Esophagus muscularis mucosa (tissue), 4 donors: ENCODE measurements at regions of chr2 and their contacts with region 1.

Region 1: DNA sequence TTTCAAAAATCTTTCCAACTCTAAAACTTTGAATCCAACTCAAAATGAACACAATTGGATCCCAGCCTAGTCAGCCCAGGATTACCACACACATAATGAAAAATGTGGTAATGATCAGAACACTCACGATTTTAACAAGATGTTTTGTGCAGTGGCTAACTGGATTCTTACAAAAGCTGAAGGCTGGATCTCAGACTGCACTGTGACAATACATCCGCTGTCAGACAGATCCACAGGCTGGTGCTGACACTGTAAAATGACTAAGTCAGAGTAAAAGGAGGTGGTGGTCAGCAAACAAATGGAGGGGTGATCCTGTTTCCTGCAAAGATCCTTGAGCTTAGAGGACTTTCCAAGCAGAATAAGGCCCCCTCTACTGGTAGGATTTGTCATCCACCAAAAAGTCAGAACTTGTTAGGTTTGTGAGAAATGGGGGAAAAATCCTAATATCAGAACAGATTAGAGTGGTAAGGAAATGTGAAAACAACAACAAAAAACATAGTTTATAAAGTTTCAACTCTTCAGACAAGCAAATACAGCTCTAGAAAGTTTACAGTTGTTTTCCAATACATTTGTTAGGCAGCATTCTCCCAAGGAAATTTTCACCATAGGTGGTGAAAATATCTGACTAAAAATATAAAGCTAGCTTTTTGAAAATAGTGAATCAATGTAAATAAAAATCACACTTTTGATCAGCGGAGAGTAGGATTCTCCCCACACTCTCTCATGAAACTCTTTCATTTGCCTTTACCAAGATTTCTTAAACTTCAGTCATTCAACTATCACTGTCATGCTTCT is 211.9 kb downstream of the AGPS start:
- DNase-seq: peak; percentile 82
- H3K4me3 ChIP-seq: no peak overlapping the region
- H3K27ac ChIP-seq: no peak overlapping the region
- H3K4me1 ChIP-seq: peaks cover under 1 to 9% (median 4%) of the 10 kb centered on the region in 4 donors
- H3K27me3 ChIP-seq: no peaks in the 10 kb centered on the region
- CTCF ChIP-seq: peak; percentile 47 to 71 (median 63)
- EP300 ChIP-seq: no peak
- POLR2A ChIP-seq: no peak

Region 2: GRCh38 chr2:177169810-177170514 is 434.5 kb before region 1 on chr2:
- intact Hi-C with region 1: loop called (anchors 10 kb)
- DNase-seq: no peak
- H3K4me3 ChIP-seq: no peak overlapping the region
- H3K27ac ChIP-seq: no peak overlapping the region
- H3K4me1 ChIP-seq: peaks cover 10 to 19% (median 11%) of the 10 kb centered on the region in 4 donors
- H3K27me3 ChIP-seq: no peaks in the 10 kb centered on the region
- CTCF ChIP-seq: no peak
- EP300 ChIP-seq: no peak
- POLR2A ChIP-seq: no peak

Region 3: DNA sequence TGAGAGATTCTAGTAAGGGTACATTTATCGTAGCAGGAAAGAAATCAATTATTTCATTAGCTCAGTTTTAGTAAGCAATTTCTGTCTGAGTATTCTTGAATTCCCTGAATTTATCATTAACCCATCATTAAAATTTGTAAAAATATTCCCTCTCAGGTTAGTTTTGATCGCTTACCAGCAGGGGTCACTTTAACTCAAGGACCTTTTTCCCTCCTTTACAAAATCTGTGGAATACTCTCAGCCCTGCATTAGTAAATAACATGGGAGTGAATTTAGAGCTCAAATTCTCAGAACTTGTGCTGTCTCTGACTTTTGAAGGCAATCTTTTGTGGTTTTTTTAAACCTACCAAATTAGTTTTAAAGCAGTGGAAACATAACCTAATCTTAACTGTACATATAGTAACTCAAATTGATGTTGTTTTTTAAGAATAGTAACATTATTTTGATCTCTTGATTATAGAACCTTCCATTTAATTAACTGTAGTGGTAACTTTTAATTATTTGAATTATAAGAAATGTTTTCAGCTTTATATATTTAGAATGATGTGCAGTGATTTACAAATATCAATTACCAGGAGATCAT is 114.7 kb before region 1 on chr2:
- intact Hi-C with region 1: loop called (anchors 10 kb)
- DNase-seq: no peak
- H3K4me3 ChIP-seq: no peak overlapping the region
- H3K27ac ChIP-seq: no peak overlapping the region
- H3K4me1 ChIP-seq: no peaks in the 10 kb centered on the region
- H3K27me3 ChIP-seq: no peaks in the 10 kb centered on the region
- CTCF ChIP-seq: peak; percentile 24 to 55 (median 54)
- EP300 ChIP-seq: no peak
- POLR2A ChIP-seq: no peak

Region 4: GRCh38 chr2:177552422-177553175 is 51.9 kb before region 1 on chr2:
- intact Hi-C with region 1: loop called (anchors 5 kb)
- DNase-seq: peak; percentile 97
- H3K4me3 ChIP-seq: peak overlapping the region; percentile 74 to 91 (median 82)
- H3K27ac ChIP-seq: peak overlapping the region; percentile 91 to 95 (median 93)
- H3K4me1 ChIP-seq: peaks cover 5 to 15% (median 14%) of the 10 kb centered on the region in 4 donors
- H3K27me3 ChIP-seq: no peaks in the 10 kb centered on the region
- CTCF ChIP-seq: no peak
- EP300 ChIP-seq: no peak
- POLR2A ChIP-seq: no peak